ENCODE measurements at regions of chr12 and their contacts with region 1.

Region 1: DNA sequence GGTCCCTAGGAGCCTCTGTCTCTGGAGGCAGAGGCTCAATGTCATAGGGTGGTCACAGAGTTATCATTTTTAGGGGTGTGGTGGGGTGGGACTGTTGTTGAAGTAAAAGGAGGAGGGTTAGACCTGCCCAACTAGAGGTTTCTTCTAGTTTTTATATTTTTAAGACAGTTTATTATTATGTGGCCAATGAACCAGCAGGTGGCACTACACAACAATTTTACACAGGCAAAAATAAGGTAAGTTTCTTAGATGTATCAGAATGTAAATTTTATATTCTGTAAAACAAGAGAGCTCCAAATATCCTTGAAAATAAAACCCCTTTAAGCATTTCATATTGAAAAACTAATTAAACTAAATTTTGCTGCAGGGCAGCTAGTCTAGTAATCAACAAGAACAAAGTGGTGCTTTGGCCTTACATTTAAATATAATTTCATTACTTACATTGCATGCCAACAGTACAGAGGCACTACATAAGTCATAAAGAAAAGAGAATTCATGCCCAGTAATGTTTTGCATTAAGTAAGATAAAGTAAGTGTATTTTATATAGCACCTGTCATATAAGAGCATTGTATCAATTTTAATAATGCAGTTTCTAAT is 22.2 kb upstream of the OVCH1 start:
- DNase-seq: peak; percentile 23 to 49 (median 26)
- ATAC-seq: peak; percentile 44; the same call in 2 of the 3 replicates
- H3K4me3 ChIP-seq: no peak overlapping the region
- H3K27ac ChIP-seq: no peak overlapping the region
- H3K4me1 ChIP-seq: no peaks in the 10 kb centered on the region; a peak in 1 of 5 replicates
- H3K27me3 ChIP-seq: peaks cover 0 to 4% of the 10 kb centered on the region in 2 experiments; a peak in 1 of 5 replicates
- CTCF ChIP-seq: peak; percentile 26 to 73 (median 42); a peak in 3 of 6 replicates
- EP300 ChIP-seq: no peak
- POLR2A ChIP-seq: no peak
- RAD21 ChIP-seq: peak; percentile 64 to 79

Region 2: DNA sequence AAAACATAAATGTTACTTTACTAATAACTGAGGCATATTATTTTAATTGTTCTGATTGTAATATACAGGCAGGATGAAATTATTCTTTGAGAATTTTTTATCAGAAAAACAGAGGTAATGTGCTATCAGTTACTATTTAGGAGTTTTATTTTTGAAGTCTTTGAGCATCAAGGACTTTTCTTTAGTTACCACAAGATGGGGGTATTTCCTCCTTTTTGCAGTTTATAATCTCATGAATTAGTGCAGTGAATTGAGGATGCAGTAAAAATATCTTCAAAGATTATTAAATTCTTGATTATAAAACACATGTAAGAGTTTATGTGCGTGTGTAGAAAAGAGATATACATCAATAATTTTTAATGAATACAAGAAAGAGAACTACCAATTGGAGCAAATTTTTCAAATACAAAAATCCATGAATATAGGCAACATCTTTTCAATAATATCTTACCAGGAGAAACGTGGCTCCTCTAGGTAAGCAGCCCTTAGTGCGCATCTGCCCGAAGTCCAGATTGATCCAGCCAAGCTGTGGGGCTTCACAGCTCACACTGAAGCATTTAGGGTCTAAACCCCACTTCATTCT is 210.3 kb before region 1 on chr12:
- CTCF ChIA-PET with region 1: interaction called, 9 read pairs
- POLR2A ChIA-PET with region 1: no interaction called
- in situ Hi-C with region 1: no loop called
- intact Hi-C with region 1: loop called (anchors 1 kb)
- DNase-seq: peak in 2 of 4 experiments; percentile 8 to 11
- ATAC-seq: no peak
- H3K4me3 ChIP-seq: no peak overlapping the region
- H3K27ac ChIP-seq: no peak overlapping the region
- H3K4me1 ChIP-seq: no peaks in the 10 kb centered on the region
- H3K27me3 ChIP-seq: no peaks in the 10 kb centered on the region
- CTCF ChIP-seq: peak; percentile 15 to 49 (median 19); a peak in 3 of 6 replicates
- EP300 ChIP-seq: no peak
- POLR2A ChIP-seq: no peak
- RAD21 ChIP-seq: peak; percentile 63 to 66

Region 3: DNA sequence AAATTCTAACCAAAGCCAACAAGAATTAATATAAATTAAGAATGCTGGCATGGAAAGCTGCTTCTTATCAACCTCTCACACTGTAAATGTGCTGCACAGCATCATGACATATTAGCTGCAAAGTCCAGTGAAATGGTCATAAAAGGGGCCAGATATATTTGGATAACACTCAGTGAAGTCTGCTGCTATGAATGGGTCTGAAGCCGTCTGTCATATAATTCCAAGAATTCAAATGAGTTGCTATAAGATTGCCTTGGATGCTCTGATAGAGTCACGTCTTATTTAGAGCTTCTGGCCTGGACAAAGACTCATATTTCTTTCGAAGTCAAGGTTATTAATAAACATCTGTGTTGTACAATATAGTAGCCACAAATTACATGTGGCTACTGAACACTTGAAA is 32.1 kb after region 1 on chr12:
- CTCF ChIA-PET with region 1: no interaction called
- POLR2A ChIA-PET with region 1: no interaction called
- in situ Hi-C with region 1: no loop called
- intact Hi-C with region 1: no loop called
- DNase-seq: no peak
- ATAC-seq: no peak
- H3K4me3 ChIP-seq: no peak overlapping the region
- H3K27ac ChIP-seq: no peak overlapping the region
- H3K4me1 ChIP-seq: no peaks in the 10 kb centered on the region
- H3K27me3 ChIP-seq: no peaks in the 10 kb centered on the region
- CTCF ChIP-seq: no peak
- EP300 ChIP-seq: no peak
- POLR2A ChIP-seq: no peak
- RAD21 ChIP-seq: no peak